Naive thymus-derived CD4-positive, alpha-beta T cell (primary cell): ENCODE measurements at regions of chr11 and their contacts with region 1.

Region 1: GRCh38 chr11:45846974-45847910 is at the start of gene CRY2:
- DNase-seq: peak; percentile 94 to 98 (median 97)
- ATAC-seq: peak; percentile 90
- H3K4me3 ChIP-seq: peak within 1 kb of the TSS; percentile 85
- H3K4me3 Mint-ChIP-seq: peak within 1 kb of the TSS; percentile 78 to 96 (median 90)
- H3K27ac ChIP-seq: peak within 1 kb of the TSS; percentile 91
- H3K27ac Mint-ChIP-seq: peak within 1 kb of the TSS; percentile 89 to 99 (median 96)
- H3K4me1 ChIP-seq: peaks cover 21 to 34% of the 10 kb centered on the region in 2 donors
- H3K4me1 Mint-ChIP-seq: peaks cover 40 to 68% (median 54%) of the 10 kb centered on the region in 7 donors
- H3K27me3 ChIP-seq: no peaks in the 10 kb centered on the region
- H3K27me3 Mint-ChIP-seq: peaks cover 0 to 20% (median 0%) of the 10 kb centered on the region in 5 donors
- total RNA-seq, gene CRY2: 31.1 to 202 (median 66.9) TPM

Region 2: DNA sequence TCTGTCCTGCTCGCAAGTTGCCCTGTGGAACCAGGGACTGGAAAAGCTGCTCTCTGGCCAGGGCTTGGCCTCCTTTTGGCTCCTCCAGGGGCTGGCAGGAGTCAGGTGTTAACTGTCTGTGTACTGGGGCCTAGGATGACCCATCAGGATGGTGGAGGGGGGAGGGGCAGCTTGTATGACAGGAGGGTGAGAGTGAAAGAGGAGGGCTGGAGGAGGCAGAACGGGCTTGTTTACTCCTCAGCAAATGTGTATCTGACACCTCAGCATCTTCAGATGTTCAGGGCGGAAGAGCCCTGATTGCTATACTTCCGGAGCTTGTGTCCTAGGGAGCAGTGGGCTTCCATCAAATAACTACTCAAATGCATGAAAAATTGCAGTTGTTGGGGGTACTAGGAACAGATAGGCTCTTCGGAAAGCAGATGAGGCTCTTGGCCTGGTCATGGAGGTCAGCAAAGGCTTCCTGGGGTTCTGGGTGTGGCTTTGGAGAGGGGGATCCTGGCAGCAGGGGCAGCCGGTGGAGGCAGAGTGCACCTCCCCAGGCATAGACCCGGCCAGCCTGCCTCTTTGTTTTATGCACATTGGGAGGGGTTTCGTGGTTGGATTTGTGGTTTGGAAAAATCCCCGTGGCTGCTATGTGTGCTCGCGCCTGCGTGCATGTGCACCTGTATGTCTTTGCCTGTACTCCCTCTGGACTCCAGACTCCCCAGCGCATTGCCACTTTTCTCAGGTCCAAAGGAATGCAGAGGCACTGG is 1250.5 kb before region 1 on chr11:
- CTCF ChIA-PET with region 1: no interaction called
- POLR2A ChIA-PET with region 1: no interaction called
- intact Hi-C with region 1: loop called in 1 of 2 experiments (anchors 10 kb)
- DNase-seq: peak; percentile 28 to 81 (median 70)
- ATAC-seq: peak; percentile 86
- H3K4me3 ChIP-seq: peak overlapping the region; percentile 54
- H3K4me3 Mint-ChIP-seq: peak overlapping the region; percentile 69 to 91 (median 80)
- H3K27ac ChIP-seq: peak overlapping the region; percentile 70
- H3K27ac Mint-ChIP-seq: peak overlapping the region; percentile 87 to 98 (median 95)
- H3K4me1 ChIP-seq: peaks cover 37 to 38% of the 10 kb centered on the region in 2 donors
- H3K4me1 Mint-ChIP-seq: peaks cover 15 to 80% (median 71%) of the 10 kb centered on the region in 7 donors
- H3K27me3 ChIP-seq: no peaks in the 10 kb centered on the region
- H3K27me3 Mint-ChIP-seq: no peaks in the 10 kb centered on the region

Region 3: GRCh38 chr11:45771566-45772448 is 75.4 kb before region 1 on chr11:
- CTCF ChIA-PET with region 1: interaction called, 3 read pairs
- POLR2A ChIA-PET with region 1: no interaction called
- intact Hi-C with region 1: loop called (anchors 1 kb)
- DNase-seq: peak; percentile 57 to 86 (median 70)
- ATAC-seq: peak; percentile 91
- H3K4me3 ChIP-seq: peak overlapping the region; percentile 83
- H3K4me3 Mint-ChIP-seq: peak overlapping the region; percentile 85 to 99 (median 92)
- H3K27ac ChIP-seq: peak overlapping the region; percentile 54
- H3K27ac Mint-ChIP-seq: peak overlapping the region; percentile 26 to 84 (median 72)
- H3K4me1 ChIP-seq: peaks cover 7 to 15% of the 10 kb centered on the region in 2 donors
- H3K4me1 Mint-ChIP-seq: peaks cover 6 to 16% (median 12%) of the 10 kb centered on the region in 7 donors
- H3K27me3 ChIP-seq: no peaks in the 10 kb centered on the region
- H3K27me3 Mint-ChIP-seq: peaks cover 0 to 5% (median 0%) of the 10 kb centered on the region in 5 donors

Region 4: GRCh38 chr11:45834298-45834756 is 12.9 kb before region 1 on chr11:
- CTCF ChIA-PET with region 1: interaction called, 5 read pairs
- POLR2A ChIA-PET with region 1: interaction called, 4 read pairs
- intact Hi-C with region 1: loop called in 1 of 2 experiments (anchors 1 kb)
- DNase-seq: peak in 1 of 9 donors; percentile 27
- ATAC-seq: peak; percentile 47
- H3K4me3 ChIP-seq: no peak overlapping the region
- H3K4me3 Mint-ChIP-seq: peak overlapping the region in 5 of 10 donors; percentile 0 to 88 (median 29)
- H3K27ac ChIP-seq: no peak overlapping the region
- H3K27ac Mint-ChIP-seq: peak overlapping the region in 3 of 9 donors; percentile 23 to 92 (median 71)
- H3K4me1 ChIP-seq: no peaks in the 10 kb centered on the region
- H3K4me1 Mint-ChIP-seq: peaks cover 7 to 40% (median 11%) of the 10 kb centered on the region in 7 donors
- H3K27me3 ChIP-seq: no peaks in the 10 kb centered on the region
- H3K27me3 Mint-ChIP-seq: peaks cover 0 to 31% (median 0%) of the 10 kb centered on the region in 5 donors

Region 5: GRCh38 chr11:45917623-45918330 is 70.5 kb after region 1 on chr11 and contains the start of gene PEX16:
- CTCF ChIA-PET with region 1: interaction called, 3 read pairs
- POLR2A ChIA-PET with region 1: interaction called, 17 read pairs
- intact Hi-C with region 1: loop called (anchors 1 kb)
- DNase-seq: peak; percentile 86 to 98 (median 97)
- ATAC-seq: peak; percentile 95
- H3K4me3 ChIP-seq: peak within 1 kb of the TSS; percentile 72
- H3K4me3 Mint-ChIP-seq: peak within 1 kb of the TSS; percentile 86 to 98 (median 96)
- H3K27ac ChIP-seq: peak within 1 kb of the TSS; percentile 87
- H3K27ac Mint-ChIP-seq: peak within 1 kb of the TSS; percentile 91 to 100 (median 98)
- H3K4me1 ChIP-seq: peaks cover 24 to 36% of the 10 kb centered on the region in 2 donors
- H3K4me1 Mint-ChIP-seq: peaks cover 31 to 66% (median 49%) of the 10 kb centered on the region in 7 donors
- H3K27me3 ChIP-seq: no peaks in the 10 kb centered on the region
- H3K27me3 Mint-ChIP-seq: peaks cover 0 to 13% (median 4%) of the 10 kb centered on the region in 5 donors
- total RNA-seq, gene PEX16: 48.2 to 64.3 (median 58.1) TPM

Region 6: DNA sequence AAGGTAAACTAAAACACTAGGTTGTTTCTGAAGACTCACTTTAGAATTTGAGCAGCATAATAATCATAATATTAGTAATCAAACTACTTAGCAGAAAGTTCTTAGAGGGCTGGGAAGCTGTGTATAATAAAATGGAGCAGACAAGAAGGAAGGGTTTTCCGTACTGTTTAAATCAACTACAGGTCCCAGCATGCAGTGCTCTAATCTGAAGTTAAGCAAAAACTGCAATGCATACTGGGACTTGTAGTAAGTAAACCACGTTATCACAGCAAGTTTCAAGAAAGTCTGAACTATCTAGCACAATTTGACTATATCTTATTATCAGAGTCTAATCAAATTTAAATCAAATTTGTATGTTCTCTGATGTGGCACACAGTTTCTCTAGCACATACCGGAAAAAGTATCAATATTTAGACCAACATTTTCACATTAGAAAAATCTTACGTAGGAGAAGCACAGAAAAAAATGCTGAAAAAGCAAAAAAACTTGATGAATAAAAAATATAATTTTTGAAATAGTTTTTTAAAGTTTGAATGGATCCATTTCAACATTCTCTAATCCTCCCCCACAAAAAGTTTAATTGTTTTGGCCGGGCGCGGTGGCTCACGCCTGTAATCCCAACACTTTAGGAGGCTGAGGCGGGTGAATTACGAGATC is 265.8 kb after region 1 on chr11:
- CTCF ChIA-PET with region 1: interaction called, 3 read pairs
- POLR2A ChIA-PET with region 1: no interaction called
- intact Hi-C with region 1: loop called (anchors 2 to 5 kb)
- DNase-seq: peak in 7 of 9 donors; percentile 36 to 76 (median 55)
- ATAC-seq: peak; percentile 99
- H3K4me3 ChIP-seq: no peak overlapping the region
- H3K4me3 Mint-ChIP-seq: peak overlapping the region in 6 of 10 donors; percentile 27 to 57 (median 31)
- H3K27ac ChIP-seq: no peak overlapping the region
- H3K27ac Mint-ChIP-seq: peak overlapping the region in 4 of 9 donors; percentile 51 to 63 (median 56)
- H3K4me1 ChIP-seq: peaks cover 13 to 23% of the 10 kb centered on the region in 2 donors
- H3K4me1 Mint-ChIP-seq: peaks cover 24 to 57% (median 45%) of the 10 kb centered on the region in 7 donors
- H3K27me3 ChIP-seq: no peaks in the 10 kb centered on the region
- H3K27me3 Mint-ChIP-seq: no peaks in the 10 kb centered on the region

Region 7: GRCh38 chr11:47642099-47642855 is 1795.0 kb after region 1 on chr11 and contains the start of gene MTCH2:
- CTCF ChIA-PET with region 1: no interaction called
- POLR2A ChIA-PET with region 1: no interaction called
- intact Hi-C with region 1: loop called in 1 of 2 experiments (anchors 5 kb)
- DNase-seq: peak; percentile 92 to 97 (median 95)
- ATAC-seq: peak; percentile 97
- H3K4me3 ChIP-seq: peak within 1 kb of the TSS; percentile 85
- H3K4me3 Mint-ChIP-seq: peak within 1 kb of the TSS; percentile 92 to 99 (median 96)
- H3K27ac ChIP-seq: peak within 1 kb of the TSS; percentile 83
- H3K27ac Mint-ChIP-seq: peak within 1 kb of the TSS; percentile 94 to 99 (median 97)
- H3K4me1 ChIP-seq: peaks cover 8 to 11% of the 10 kb centered on the region in 2 donors
- H3K4me1 Mint-ChIP-seq: peaks cover 17 to 32% (median 25%) of the 10 kb centered on the region in 7 donors
- H3K27me3 ChIP-seq: no peaks in the 10 kb centered on the region
- H3K27me3 Mint-ChIP-seq: no peaks in the 10 kb centered on the region
- total RNA-seq, gene MTCH2: 19.8 to 88.6 (median 21.1) TPM